Dendritic cell treated with granulocyte-macrophage colony-stimulating factor and Interleukin-4, amounts not matched to agents 40 ng/mL and 50 ng/mL, for 4 days (primary cell): ENCODE measurements at regions of chr5 and their contacts with region 1.

Region 1: DNA sequence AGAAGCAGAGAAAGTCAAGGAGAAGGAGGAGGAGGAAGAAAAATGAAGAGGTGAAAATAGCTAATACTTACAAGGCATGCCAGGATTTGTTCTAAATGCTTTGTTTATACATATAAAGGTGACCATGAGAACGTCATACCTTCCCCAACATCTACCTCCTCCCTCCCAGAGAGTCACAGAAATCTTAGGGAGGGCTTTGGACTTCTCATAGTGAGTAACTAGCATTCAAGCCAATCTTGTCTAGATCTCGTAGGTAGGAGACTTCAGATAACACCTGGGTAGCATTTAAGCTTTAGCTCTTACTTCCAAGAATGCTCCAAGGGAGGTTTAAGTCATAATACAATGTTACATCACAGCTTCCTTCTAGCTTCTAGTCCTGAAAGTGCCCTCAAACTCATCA is 36.5 kb upstream of the GPBP1 start:
- H3K4me3 Mint-ChIP-seq: no peak overlapping the region
- H3K27ac Mint-ChIP-seq: no peak overlapping the region
- H3K4me1 Mint-ChIP-seq: no peaks in the 10 kb centered on the region
- H3K27me3 Mint-ChIP-seq: no peaks in the 10 kb centered on the region

Region 2: GRCh38 chr5:56900858-56901578 is 236.4 kb before region 1 on chr5:
- intact Hi-C with region 1: loop called (anchors 2 kb)
- H3K4me3 Mint-ChIP-seq: no peak overlapping the region
- H3K27ac Mint-ChIP-seq: no peak overlapping the region
- H3K4me1 Mint-ChIP-seq: peaks cover 6% of the 10 kb centered on the region
- H3K27me3 Mint-ChIP-seq: no peaks in the 10 kb centered on the region

Region 3: DNA sequence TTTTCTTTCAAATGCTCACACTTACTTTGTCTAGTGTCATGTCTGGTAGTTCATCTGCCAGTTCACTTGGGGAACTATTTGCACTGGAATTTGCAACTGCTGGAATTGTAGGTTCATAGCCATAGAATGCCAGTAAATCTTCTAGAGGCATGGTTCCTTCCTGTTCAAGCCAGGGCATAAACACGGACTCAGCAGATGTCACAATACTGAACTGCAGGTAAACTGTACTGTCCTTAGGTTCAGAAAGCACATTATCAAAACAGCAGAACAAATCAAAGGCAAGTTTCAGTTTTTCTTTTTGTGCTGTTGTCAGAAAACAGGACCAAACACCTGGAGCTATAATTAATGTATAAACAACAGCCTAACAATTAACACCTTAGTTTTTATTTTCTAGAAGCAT is 198.5 kb before region 1 on chr5:
- intact Hi-C with region 1: loop called (anchors 10 kb)
- H3K4me3 Mint-ChIP-seq: no peak overlapping the region
- H3K27ac Mint-ChIP-seq: no peak overlapping the region
- H3K4me1 Mint-ChIP-seq: peaks cover 12% of the 10 kb centered on the region
- H3K27me3 Mint-ChIP-seq: no peaks in the 10 kb centered on the region

Region 4: DNA sequence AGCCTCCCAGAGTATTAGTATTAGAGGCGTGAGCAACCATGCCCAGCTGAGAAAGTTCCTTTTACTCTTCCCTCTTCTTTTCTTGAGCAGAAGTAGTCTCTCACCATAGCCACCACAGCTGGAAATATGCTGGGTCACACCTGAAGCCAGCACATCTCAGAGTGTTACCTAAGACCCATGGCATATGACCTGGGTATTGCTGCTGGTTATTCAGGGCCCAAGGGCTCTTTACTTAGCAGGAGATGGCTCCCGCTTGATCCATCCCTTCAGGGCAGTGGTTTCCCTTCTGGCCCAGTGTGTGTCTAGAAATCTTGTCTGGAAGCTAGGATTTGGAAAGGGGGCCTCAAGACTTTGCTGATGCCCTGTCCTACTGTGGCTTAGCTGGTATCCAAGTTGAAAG is 13.3 kb after region 1 on chr5:
- intact Hi-C with region 1: no loop called
- H3K4me3 Mint-ChIP-seq: no peak overlapping the region
- H3K27ac Mint-ChIP-seq: no peak overlapping the region
- H3K4me1 Mint-ChIP-seq: peaks cover 5% of the 10 kb centered on the region
- H3K27me3 Mint-ChIP-seq: peaks cover 1% of the 10 kb centered on the region

Region 5: GRCh38 chr5:57173185-57174127 is 36.1 kb after region 1 on chr5 and contains the start of gene GPBP1:
- intact Hi-C with region 1: loop called (anchors 5 kb)
- H3K4me3 Mint-ChIP-seq: peak within 1 kb of the TSS; percentile 96
- H3K27ac Mint-ChIP-seq: peak within 1 kb of the TSS; percentile 100
- H3K4me1 Mint-ChIP-seq: peaks cover 39% of the 10 kb centered on the region
- H3K27me3 Mint-ChIP-seq: no peaks in the 10 kb centered on the region

Region 6: GRCh38 chr5:57221049-57221568 is 83.7 kb after region 1 on chr5:
- intact Hi-C with region 1: loop called (anchors 2 kb)
- H3K4me3 Mint-ChIP-seq: no peak overlapping the region
- H3K27ac Mint-ChIP-seq: no peak overlapping the region
- H3K4me1 Mint-ChIP-seq: peaks cover 5% of the 10 kb centered on the region
- H3K27me3 Mint-ChIP-seq: no peaks in the 10 kb centered on the region

Region 7: GRCh38 chr5:57231607-57232006 is 94.2 kb after region 1 on chr5:
- intact Hi-C with region 1: no loop called
- H3K4me3 Mint-ChIP-seq: no peak overlapping the region
- H3K27ac Mint-ChIP-seq: no peak overlapping the region
- H3K4me1 Mint-ChIP-seq: peaks cover 6% of the 10 kb centered on the region
- H3K27me3 Mint-ChIP-seq: no peaks in the 10 kb centered on the region

Region 8: GRCh38 chr5:57903458-57903857 is 766.1 kb after region 1 on chr5:
- intact Hi-C with region 1: no loop called
- H3K4me3 Mint-ChIP-seq: no peak overlapping the region
- H3K27ac Mint-ChIP-seq: no peak overlapping the region
- H3K4me1 Mint-ChIP-seq: no peaks in the 10 kb centered on the region
- H3K27me3 Mint-ChIP-seq: no peaks in the 10 kb centered on the region